CD4-positive, alpha-beta T cell (primary cell): ENCODE measurements at regions of chr21 and their contacts with region 1.

Region 1: DNA sequence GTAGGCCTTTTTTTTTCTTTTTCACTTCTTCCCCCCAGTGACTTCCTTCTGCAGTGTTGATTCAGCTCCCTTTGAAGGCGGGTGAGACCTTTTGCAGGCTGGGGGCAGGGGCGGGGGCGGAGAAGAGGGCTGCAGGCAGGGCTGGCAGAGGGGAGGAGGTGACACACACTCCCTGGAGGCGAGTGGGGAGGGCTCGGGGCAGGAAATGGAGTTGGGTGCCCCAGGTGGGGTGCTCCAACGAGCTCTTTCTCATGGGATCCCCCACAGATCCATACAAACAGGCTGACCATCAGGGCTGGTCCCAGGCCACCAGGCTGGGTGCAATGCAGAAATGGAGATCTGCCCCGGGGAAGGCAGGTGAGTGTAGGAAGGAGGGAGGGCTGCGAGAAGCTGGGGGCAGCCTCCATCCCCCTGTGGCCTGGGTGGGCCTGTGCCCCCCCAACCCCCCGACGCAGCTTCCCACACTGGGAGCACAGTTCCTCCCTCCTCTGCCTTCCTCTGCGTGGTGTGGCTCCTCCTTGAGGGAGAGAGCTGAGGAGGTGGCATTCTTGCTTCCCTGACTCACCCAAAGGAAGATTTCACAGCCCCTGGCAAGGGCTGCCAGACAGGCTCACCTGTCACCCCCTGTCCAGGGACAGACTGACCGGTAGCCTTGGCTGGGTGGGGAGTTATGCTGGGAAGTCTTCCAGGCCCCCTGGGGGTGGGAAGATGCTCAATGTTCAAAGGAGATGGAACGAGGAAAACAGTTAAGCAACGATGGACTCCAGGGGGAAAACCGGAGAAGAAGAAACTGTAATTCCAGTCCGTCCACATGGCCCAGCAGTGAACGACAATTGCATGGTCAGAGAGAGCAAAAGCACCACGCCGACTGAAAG is 7.1 kb upstream of the ITGB2 start:
- DNase-seq: peak; percentile 65 to 97 (median 92)
- ATAC-seq: peak; percentile 79
- H3K4me3 ChIP-seq: peak overlapping the region; percentile 83
- H3K4me3 Mint-ChIP-seq: peak overlapping the region; percentile 86
- H3K27ac ChIP-seq: peak overlapping the region; percentile 74 to 79
- H3K27ac Mint-ChIP-seq: peak overlapping the region; percentile 96
- H3K4me1 ChIP-seq: peaks cover 85% of the 10 kb centered on the region
- H3K4me1 Mint-ChIP-seq: peaks cover 85% of the 10 kb centered on the region
- H3K27me3 ChIP-seq: no peaks in the 10 kb centered on the region
- H3K27me3 Mint-ChIP-seq: no peaks in the 10 kb centered on the region
- CTCF ChIP-seq: no peak

Region 2: DNA sequence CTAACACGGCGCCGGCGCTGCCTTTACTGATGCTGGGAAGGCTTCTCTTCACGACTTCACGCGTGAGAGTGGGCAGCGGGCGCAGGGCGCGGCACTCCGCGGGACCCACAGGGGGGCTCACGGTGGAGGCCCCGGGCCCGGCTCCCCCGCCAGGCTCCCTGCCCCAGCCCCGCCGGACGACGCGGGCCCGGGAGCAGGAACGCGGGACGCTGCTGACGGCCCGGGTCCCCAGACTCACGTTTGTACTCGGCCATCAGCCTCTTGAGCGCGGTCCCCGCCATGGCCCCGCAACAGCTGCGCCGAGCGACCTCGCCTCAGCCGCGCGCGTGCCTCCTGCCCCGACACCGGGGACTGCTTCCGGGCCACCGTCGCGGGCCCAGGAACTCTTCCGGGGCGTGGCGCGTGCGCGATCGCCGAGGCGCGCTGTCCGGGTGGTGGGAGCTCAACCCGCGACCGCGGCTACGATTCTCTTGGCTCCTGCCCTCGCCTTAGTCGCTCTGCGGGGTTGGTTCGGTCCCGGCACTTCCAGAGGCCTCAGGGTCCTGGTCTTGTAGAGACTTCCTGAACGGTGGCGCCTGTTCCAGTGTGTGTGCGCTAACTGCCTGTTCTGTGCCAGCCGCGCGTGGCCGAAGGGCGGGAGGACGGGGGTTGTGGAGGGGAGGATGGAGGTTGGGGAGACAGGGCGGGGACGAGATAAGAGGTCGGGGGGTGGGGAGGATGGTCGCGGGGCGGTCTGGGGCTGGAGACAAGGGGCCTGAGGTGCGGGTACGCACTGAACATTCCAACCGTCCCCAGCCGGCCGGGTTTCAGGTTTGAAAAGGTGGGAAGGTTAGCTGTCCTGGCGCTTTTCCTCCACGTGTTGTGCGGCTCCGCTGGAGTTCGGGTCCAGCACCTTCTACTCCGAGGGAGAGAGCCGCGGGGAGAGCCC is 126.1 kb before region 1 on chr21 and contains the start of gene UBE2G2:
- CTCF ChIA-PET with region 1: interaction called, 12 read pairs
- POLR2A ChIA-PET with region 1: interaction called, 21 read pairs
- intact Hi-C with region 1: loop called (anchors 1 to 2 kb)
- DNase-seq: peak; percentile 75 to 93 (median 85)
- ATAC-seq: peak; percentile 88
- H3K4me3 ChIP-seq: peak within 1 kb of the TSS; percentile 78
- H3K4me3 Mint-ChIP-seq: peak within 1 kb of the TSS; percentile 95
- H3K27ac ChIP-seq: peak within 1 kb of the TSS; percentile 25 to 66
- H3K27ac Mint-ChIP-seq: peak within 1 kb of the TSS; percentile 80
- H3K4me1 ChIP-seq: peaks cover 28% of the 10 kb centered on the region
- H3K4me1 Mint-ChIP-seq: peaks cover 55% of the 10 kb centered on the region
- H3K27me3 ChIP-seq: no peaks in the 10 kb centered on the region
- H3K27me3 Mint-ChIP-seq: no peaks in the 10 kb centered on the region
- CTCF ChIP-seq: no peak
- total RNA-seq, gene UBE2G2: 89.9 to 96.8 TPM

Region 3: GRCh38 chr21:44880762-44881585 is 46.9 kb before region 1 on chr21:
- CTCF ChIA-PET with region 1: interaction called, 5 read pairs
- POLR2A ChIA-PET with region 1: interaction called, 14 read pairs
- intact Hi-C with region 1: no loop called
- DNase-seq: peak in 2 of 14 experiments; percentile 67 to 75
- ATAC-seq: peak; percentile 67
- H3K4me3 ChIP-seq: no peak overlapping the region
- H3K4me3 Mint-ChIP-seq: peak overlapping the region; percentile 12
- H3K27ac ChIP-seq: peak overlapping the region; percentile 28 to 29
- H3K27ac Mint-ChIP-seq: peak overlapping the region; percentile 73
- H3K4me1 ChIP-seq: peaks cover 27% of the 10 kb centered on the region
- H3K4me1 Mint-ChIP-seq: peaks cover 24% of the 10 kb centered on the region
- H3K27me3 ChIP-seq: no peaks in the 10 kb centered on the region
- H3K27me3 Mint-ChIP-seq: no peaks in the 10 kb centered on the region
- CTCF ChIP-seq: no peak

Region 4: DNA sequence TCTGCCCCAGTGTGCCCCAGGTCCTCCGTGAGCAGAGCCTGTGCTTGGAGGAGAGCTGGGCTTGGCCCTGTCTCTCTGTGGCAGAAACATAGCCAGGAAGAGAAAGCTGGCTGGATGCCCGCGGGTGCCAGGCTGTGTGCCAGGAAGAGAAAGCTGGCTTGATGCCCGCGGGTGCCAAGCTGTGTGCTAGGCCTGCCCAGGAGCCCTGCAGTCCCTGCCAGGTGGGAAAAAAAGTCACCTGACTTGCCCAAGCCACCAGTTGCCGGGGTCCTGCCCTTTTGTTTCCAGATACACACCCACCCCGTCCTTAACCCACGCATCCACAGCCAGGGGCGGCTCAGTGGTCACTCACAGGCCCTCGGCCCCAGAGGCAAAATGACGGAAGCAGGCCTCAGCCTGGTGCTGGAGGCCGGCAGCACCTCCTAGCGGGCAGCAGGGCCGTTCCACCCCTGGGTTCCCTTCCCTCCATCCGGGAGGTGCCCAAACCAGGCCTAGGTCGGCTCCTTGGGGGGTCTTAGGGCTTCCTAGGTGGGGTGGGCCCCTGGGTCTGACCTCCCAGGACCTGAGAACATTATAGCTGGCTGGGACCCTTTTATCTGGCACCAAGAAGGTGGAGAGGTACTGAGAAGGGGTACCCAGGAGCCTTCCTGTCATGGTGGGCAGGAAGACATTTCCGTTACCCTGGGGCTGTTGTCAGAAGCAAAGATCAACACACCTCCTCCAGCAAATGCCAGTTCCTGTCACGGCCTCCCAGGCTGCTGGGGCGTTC is 16.3 kb before region 1 on chr21:
- CTCF ChIA-PET with region 1: interaction called, 24 read pairs
- POLR2A ChIA-PET with region 1: interaction called, 362 read pairs
- intact Hi-C with region 1: loop called (anchors 1 kb)
- DNase-seq: peak; percentile 45 to 88 (median 69)
- ATAC-seq: peak; percentile 74
- H3K4me3 ChIP-seq: peak overlapping the region; percentile 44
- H3K4me3 Mint-ChIP-seq: peak overlapping the region; percentile 76
- H3K27ac ChIP-seq: peak overlapping the region; percentile 77 to 86
- H3K27ac Mint-ChIP-seq: peak overlapping the region; percentile 88
- H3K4me1 ChIP-seq: peaks cover 98% of the 10 kb centered on the region
- H3K4me1 Mint-ChIP-seq: peaks cover 77% of the 10 kb centered on the region
- H3K27me3 ChIP-seq: no peaks in the 10 kb centered on the region
- H3K27me3 Mint-ChIP-seq: no peaks in the 10 kb centered on the region
- CTCF ChIP-seq: peak; percentile 58

Region 5: GRCh38 chr21:45004481-45005263 is 76.8 kb after region 1 on chr21:
- CTCF ChIA-PET with region 1: no interaction called
- POLR2A ChIA-PET with region 1: no interaction called
- intact Hi-C with region 1: no loop called
- DNase-seq: no peak
- ATAC-seq: no peak
- H3K4me3 ChIP-seq: no peak overlapping the region
- H3K4me3 Mint-ChIP-seq: no peak overlapping the region
- H3K27ac ChIP-seq: no peak overlapping the region
- H3K27ac Mint-ChIP-seq: no peak overlapping the region
- H3K4me1 ChIP-seq: no peaks in the 10 kb centered on the region
- H3K4me1 Mint-ChIP-seq: no peaks in the 10 kb centered on the region
- H3K27me3 ChIP-seq: peaks cover 0 to 2% of the 10 kb centered on the region in 2 experiments
- H3K27me3 Mint-ChIP-seq: peaks cover 6% of the 10 kb centered on the region
- CTCF ChIP-seq: no peak

Region 6: GRCh38 chr21:45074048-45074817 is 146.4 kb after region 1 on chr21 and contains the start of gene ADARB1:
- CTCF ChIA-PET with region 1: no interaction called
- POLR2A ChIA-PET with region 1: interaction called, 12 read pairs
- intact Hi-C with region 1: loop called in 1 of 2 experiments (anchors 5 kb)
- DNase-seq: peak; percentile 28 to 90 (median 58)
- ATAC-seq: peak; percentile 31
- H3K4me3 ChIP-seq: peak within 1 kb of the TSS; percentile 62
- H3K4me3 Mint-ChIP-seq: peak within 1 kb of the TSS; percentile 100
- H3K27ac ChIP-seq: no peak within 1 kb of the TSS
- H3K27ac Mint-ChIP-seq: peak within 1 kb of the TSS; percentile 98
- H3K4me1 ChIP-seq: peaks cover 44% of the 10 kb centered on the region
- H3K4me1 Mint-ChIP-seq: peaks cover 42% of the 10 kb centered on the region
- H3K27me3 ChIP-seq: no peaks in the 10 kb centered on the region
- H3K27me3 Mint-ChIP-seq: no peaks in the 10 kb centered on the region
- CTCF ChIP-seq: no peak
- total RNA-seq, gene ADARB1: 27.5 to 28.6 TPM